Activated CD4-positive, alpha-beta T cell treated with anti-CD3 and anti-CD28 coated beads for 36 hours (primary cell): ENCODE measurements at regions of chr7 and their contacts with region 1.

Region 1: GRCh38 chr7:16645593-16646471 is at the starts of genes ANKMY2 and BZW2:
- DNase-seq: peak; percentile 95
- ATAC-seq: peak; percentile 90
- H3K4me3 Mint-ChIP-seq: peak within 1 kb of the TSS; percentile 98
- H3K27ac Mint-ChIP-seq: peak within 1 kb of the TSS; percentile 99
- H3K4me1 Mint-ChIP-seq: peaks cover 48% of the 10 kb centered on the region
- H3K27me3 Mint-ChIP-seq: no peaks in the 10 kb centered on the region
- total RNA-seq, gene ANKMY2: 9.0 to 10.1 TPM
- total RNA-seq, gene BZW2: 106 to 113 TPM

Region 2: DNA sequence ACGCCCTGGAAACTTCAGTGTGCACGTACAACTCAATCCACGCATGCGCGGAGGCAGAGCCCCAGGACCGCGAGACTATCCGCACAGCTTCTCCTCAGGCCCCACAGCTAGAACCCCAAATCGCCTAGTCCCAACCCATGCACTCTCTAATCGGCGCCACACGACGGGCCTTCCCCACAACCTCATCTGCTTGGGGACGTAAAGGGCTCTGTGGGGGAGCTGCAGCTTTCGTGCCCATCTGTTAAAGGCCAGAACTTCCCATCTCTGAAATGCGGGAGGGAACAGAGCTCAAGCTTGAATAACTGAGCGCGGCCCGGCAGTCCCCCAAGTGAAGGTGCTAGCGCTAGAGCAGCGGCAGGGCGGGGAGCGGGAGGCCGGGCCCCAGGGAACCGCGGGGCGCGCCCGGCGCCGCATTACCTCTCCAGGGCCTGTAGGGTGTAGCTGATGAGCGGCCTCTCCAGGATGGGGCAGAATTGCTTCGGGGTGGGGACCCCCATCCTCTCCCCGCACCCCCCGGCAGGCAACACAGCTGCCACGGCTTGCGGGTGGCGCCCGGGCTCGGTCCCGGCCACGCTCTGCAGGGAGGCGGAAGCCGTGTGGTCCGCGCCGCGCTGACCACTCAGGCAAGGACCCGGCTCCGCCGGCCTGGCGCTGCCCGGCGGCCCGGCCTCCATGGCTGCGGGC is 225.0 kb before region 1 on chr7:
- CTCF ChIA-PET with region 1: no interaction called
- POLR2A ChIA-PET with region 1: interaction called, 4 read pairs
- intact Hi-C with region 1: loop called (anchors 1 kb)
- DNase-seq: peak; percentile 93
- ATAC-seq: peak; percentile 93
- H3K4me3 Mint-ChIP-seq: peak overlapping the region; percentile 78
- H3K27ac Mint-ChIP-seq: peak overlapping the region; percentile 97
- H3K4me1 Mint-ChIP-seq: peaks cover 20% of the 10 kb centered on the region
- H3K27me3 Mint-ChIP-seq: no peaks in the 10 kb centered on the region

Region 3: GRCh38 chr7:16619979-16620408 is 25.8 kb before region 1 on chr7:
- CTCF ChIA-PET with region 1: interaction called, 21 read pairs
- POLR2A ChIA-PET with region 1: interaction called, 6 read pairs
- intact Hi-C with region 1: loop called (anchors 1 kb)
- DNase-seq: peak; percentile 25
- ATAC-seq: peak; percentile 98
- H3K4me3 Mint-ChIP-seq: peak overlapping the region; percentile 5
- H3K27ac Mint-ChIP-seq: peak overlapping the region; percentile 83
- H3K4me1 Mint-ChIP-seq: peaks cover 20% of the 10 kb centered on the region
- H3K27me3 Mint-ChIP-seq: no peaks in the 10 kb centered on the region

Region 4: DNA sequence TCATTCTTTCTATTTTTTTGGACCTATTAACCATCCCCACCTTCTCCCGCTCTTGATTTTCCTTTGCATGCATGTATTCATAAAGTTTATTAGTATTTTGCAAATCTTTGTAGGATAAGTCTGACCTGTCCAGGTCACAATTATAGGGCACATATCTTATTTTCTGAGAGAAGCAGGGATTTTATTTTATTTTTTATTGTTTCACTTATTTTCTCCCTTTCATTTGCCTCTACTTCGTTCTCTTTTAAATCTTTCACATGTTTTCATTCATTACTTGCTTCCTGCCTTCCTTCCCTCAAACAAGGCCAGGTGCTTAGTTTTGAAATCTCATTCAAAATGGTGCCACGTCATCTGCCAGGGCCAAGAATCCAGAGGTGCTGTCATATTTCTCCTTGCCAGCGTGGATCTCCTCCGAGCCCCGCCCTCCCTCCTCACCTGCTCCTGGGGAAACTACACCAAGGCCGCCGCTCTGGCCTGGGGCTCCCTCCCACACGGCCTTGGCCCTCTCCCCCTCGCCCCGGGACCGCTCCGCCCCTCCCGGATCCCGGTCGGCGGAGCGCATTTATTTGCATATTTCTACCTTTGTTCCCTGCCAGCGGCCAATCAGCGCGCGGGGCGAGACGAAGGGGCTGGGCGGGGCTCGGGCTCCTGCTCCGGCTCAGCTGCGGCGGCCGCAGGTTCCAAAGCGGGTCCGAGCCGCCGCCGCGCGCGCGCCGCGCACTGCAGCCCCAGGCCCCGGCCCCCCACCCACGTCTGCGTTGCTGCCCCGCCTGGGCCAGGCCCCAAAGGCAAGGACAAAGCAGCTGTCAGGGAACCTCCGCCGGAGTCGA is 107.5 kb after region 1 on chr7 and contains the start of gene TSPAN13:
- CTCF ChIA-PET with region 1: no interaction called
- POLR2A ChIA-PET with region 1: no interaction called
- intact Hi-C with region 1: loop called in 1 of 2 experiments (anchors 1 kb)
- DNase-seq: peak; percentile 83
- ATAC-seq: peak; percentile 93
- H3K4me3 Mint-ChIP-seq: peak within 1 kb of the TSS; percentile 71
- H3K27ac Mint-ChIP-seq: no peak within 1 kb of the TSS
- H3K4me1 Mint-ChIP-seq: peaks cover 12% of the 10 kb centered on the region
- H3K27me3 Mint-ChIP-seq: peaks cover 27% of the 10 kb centered on the region
- total RNA-seq, gene TSPAN13: 0.47 to 0.64 TPM

Region 5: GRCh38 chr7:17144322-17144721 is 498.5 kb after region 1 on chr7:
- CTCF ChIA-PET with region 1: no interaction called
- POLR2A ChIA-PET with region 1: no interaction called
- intact Hi-C with region 1: loop called in 1 of 2 experiments (anchors 10 kb)
- DNase-seq: peak; percentile 79
- ATAC-seq: peak; percentile 88
- H3K4me3 Mint-ChIP-seq: peak overlapping the region; percentile 53
- H3K27ac Mint-ChIP-seq: peak overlapping the region; percentile 83
- H3K4me1 Mint-ChIP-seq: peaks cover 51% of the 10 kb centered on the region
- H3K27me3 Mint-ChIP-seq: peaks cover 2% of the 10 kb centered on the region

Region 6: GRCh38 chr7:17159500-17160037 is 513.7 kb after region 1 on chr7:
- CTCF ChIA-PET with region 1: no interaction called
- POLR2A ChIA-PET with region 1: no interaction called
- intact Hi-C with region 1: loop called in 1 of 2 experiments (anchors 5 kb)
- DNase-seq: peak; percentile 24
- ATAC-seq: peak; percentile 90
- H3K4me3 Mint-ChIP-seq: peak overlapping the region; percentile 0
- H3K27ac Mint-ChIP-seq: peak overlapping the region; percentile 55
- H3K4me1 Mint-ChIP-seq: peaks cover 40% of the 10 kb centered on the region
- H3K27me3 Mint-ChIP-seq: peaks cover 4% of the 10 kb centered on the region